ENCODE measurements at regions of chr2 and their contacts with region 1.

Region 1: DNA sequence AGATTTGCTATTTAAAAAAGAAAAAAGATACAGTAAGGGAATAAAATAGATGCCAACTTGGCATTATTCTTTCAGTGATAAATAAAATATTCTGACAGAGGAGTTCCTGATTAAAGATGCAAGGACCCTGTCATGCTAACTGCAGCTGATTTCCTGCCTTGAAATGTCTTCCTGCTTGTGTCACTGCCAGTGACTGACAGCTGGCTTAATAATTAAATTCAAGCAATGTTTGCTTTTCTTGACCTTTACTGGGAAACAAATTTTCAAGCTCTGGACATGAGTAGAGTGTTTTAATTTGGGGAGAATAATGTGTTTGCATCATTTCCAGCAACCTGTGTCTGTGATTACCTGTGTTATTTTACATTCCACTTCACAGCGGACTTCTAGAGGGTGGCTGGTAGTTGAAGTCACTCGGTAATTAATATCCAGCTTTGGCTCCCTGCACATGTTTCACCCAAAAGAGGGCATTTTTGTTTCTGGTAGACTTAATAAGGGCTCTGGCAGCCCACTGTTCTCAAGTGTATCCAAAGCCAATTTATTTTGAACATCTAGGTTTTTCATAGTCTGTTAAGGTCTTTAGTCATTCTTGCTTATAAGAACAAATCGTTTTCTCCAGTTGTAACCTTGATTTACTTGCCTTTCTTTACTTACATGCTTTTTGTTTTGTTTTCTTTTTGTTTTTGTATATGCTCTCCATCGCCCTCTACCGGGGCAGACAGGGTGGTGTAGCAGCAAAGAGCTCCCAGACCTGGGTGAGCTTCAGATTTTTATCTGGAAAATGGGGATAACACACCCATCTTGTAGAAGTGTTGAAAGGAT is 48.5 kb upstream of the PROKR1 start:
- DNase-seq: peak; percentile 71
- ATAC-seq: no peak
- H3K4me3 Mint-ChIP-seq: peak overlapping the region; percentile 3
- H3K27ac Mint-ChIP-seq: peak overlapping the region; percentile 4
- H3K4me1 Mint-ChIP-seq: peaks cover 13% of the 10 kb centered on the region
- H3K27me3 Mint-ChIP-seq: peaks cover 12% of the 10 kb centered on the region

Region 2: DNA sequence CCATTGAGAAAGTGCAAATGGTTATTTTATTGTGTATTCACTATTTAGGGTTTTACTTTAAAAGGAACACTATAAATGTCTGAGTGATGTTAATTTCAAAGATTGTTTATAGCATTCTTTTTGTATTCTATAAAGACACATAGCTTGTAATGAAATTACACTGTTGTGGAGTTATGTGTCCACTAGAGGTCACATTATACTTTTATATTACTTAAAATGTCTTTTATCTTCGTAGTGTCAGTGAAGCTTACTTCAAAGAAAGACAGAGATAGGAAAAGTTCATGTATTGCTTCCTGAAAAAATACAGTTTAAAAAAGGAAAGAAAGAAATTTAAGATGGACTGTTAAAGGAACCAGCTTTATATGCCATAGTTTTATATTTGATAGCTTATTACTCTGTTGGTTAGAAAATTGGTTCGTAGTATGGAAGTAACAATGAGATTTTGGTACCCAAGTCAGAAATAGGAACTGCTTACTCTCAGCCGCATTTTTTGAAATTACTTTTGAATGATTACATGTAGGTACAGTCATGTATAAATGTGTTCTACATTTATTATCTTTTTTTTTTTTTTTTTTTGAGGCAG is 107.0 kb before region 1 on chr2:
- CTCF ChIA-PET with region 1: interaction called, 34 read pairs
- POLR2A ChIA-PET with region 1: no interaction called
- DNase-seq: no peak
- ATAC-seq: peak; percentile 49
- H3K4me3 Mint-ChIP-seq: no peak overlapping the region
- H3K27ac Mint-ChIP-seq: no peak overlapping the region
- H3K4me1 Mint-ChIP-seq: peaks cover 3% of the 10 kb centered on the region
- H3K27me3 Mint-ChIP-seq: no peaks in the 10 kb centered on the region

Region 3: GRCh38 chr2:68506170-68506569 is 88.7 kb before region 1 on chr2:
- CTCF ChIA-PET with region 1: interaction called, 22 read pairs
- POLR2A ChIA-PET with region 1: no interaction called
- DNase-seq: no peak
- ATAC-seq: no peak
- H3K4me3 Mint-ChIP-seq: no peak overlapping the region
- H3K27ac Mint-ChIP-seq: no peak overlapping the region
- H3K4me1 Mint-ChIP-seq: peaks cover 10% of the 10 kb centered on the region
- H3K27me3 Mint-ChIP-seq: no peaks in the 10 kb centered on the region

Region 4: DNA sequence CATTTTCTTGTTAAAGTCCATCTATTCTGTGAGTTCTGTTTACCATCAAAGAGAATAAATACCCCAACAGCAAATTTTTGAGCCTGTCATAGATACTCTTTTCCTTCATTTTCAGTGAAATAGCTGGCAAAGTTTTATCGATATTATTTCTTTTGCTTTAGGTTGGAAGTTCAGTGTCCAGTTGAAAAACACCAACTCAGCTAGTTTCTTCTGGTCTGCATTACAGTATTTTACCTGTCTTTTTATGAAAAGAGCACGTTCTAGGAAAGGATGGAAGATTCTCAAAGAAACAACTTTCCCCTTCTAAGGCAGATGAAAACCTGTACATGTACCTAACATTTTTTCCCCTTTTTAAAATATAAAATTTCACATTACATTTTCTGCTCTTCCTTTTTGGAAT is 31.9 kb before region 1 on chr2:
- CTCF ChIA-PET with region 1: interaction called, 11 read pairs
- POLR2A ChIA-PET with region 1: no interaction called
- DNase-seq: no peak
- ATAC-seq: no peak
- H3K4me3 Mint-ChIP-seq: no peak overlapping the region
- H3K27ac Mint-ChIP-seq: no peak overlapping the region
- H3K4me1 Mint-ChIP-seq: no peaks in the 10 kb centered on the region
- H3K27me3 Mint-ChIP-seq: no peaks in the 10 kb centered on the region

Region 5: GRCh38 chr2:68577183-68577582 is 17.7 kb before region 1 on chr2:
- CTCF ChIA-PET with region 1: interaction called, 18 read pairs
- POLR2A ChIA-PET with region 1: no interaction called
- DNase-seq: no peak
- ATAC-seq: no peak
- H3K4me3 Mint-ChIP-seq: no peak overlapping the region
- H3K27ac Mint-ChIP-seq: no peak overlapping the region
- H3K4me1 Mint-ChIP-seq: no peaks in the 10 kb centered on the region
- H3K27me3 Mint-ChIP-seq: no peaks in the 10 kb centered on the region

Region 6: GRCh38 chr2:68605939-68606338 is 11.1 kb after region 1 on chr2:
- CTCF ChIA-PET with region 1: interaction called, 14 read pairs
- POLR2A ChIA-PET with region 1: no interaction called
- DNase-seq: no peak
- ATAC-seq: no peak
- H3K4me3 Mint-ChIP-seq: no peak overlapping the region
- H3K27ac Mint-ChIP-seq: no peak overlapping the region
- H3K4me1 Mint-ChIP-seq: no peaks in the 10 kb centered on the region
- H3K27me3 Mint-ChIP-seq: peaks cover 7% of the 10 kb centered on the region

Region 7: DNA sequence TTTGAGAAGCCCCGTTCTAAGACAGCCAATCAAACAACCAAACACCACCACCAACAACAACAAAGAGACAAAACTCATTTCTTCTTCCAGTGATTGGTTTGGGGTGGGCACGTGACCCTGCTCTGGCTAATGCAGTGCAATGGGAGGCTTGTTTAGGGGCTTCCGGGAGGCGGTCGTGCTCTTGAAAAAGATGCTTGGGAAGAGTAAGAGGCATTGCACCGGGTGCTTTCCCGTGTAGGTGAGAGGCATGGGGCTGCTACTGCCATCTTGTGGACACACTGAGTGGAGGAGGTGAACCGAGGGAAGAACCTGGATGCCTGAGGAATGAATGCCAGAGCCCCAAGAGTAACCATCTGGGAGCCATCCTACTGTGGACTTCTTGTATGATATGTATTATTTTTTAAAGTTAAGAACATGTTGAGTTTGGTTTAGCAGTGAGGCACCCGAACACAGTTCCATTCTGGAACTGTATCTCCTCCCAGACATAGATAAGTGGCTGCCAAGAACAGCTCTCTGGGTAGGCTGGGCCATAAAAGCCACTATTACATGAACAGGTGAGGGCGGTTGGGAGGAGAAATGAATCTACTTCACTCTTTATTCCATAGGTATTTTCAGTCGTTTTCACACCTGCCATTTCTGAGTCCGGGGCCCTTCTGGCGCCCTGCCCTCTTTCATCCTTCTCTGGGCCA is 120.6 kb after region 1 on chr2:
- CTCF ChIA-PET with region 1: interaction called, 16 read pairs
- POLR2A ChIA-PET with region 1: no interaction called
- DNase-seq: peak; percentile 39
- ATAC-seq: no peak
- H3K4me3 Mint-ChIP-seq: no peak overlapping the region
- H3K27ac Mint-ChIP-seq: peak overlapping the region; percentile 85
- H3K4me1 Mint-ChIP-seq: peaks cover 82% of the 10 kb centered on the region
- H3K27me3 Mint-ChIP-seq: peaks cover 3% of the 10 kb centered on the region